HEK293 (cell line): ENCODE measurements at regions of chr16 and their contacts with region 1.

Region 1: GRCh38 chr16:74709441-74709877 is 8.8 kb upstream of the MLKL start:
- H3K4me3 ChIP-seq: no peak overlapping the region
- H3K27ac ChIP-seq: no peak overlapping the region
- H3K4me1 ChIP-seq: no peaks in the 10 kb centered on the region
- CTCF ChIP-seq: peak; percentile 88

Region 2: DNA sequence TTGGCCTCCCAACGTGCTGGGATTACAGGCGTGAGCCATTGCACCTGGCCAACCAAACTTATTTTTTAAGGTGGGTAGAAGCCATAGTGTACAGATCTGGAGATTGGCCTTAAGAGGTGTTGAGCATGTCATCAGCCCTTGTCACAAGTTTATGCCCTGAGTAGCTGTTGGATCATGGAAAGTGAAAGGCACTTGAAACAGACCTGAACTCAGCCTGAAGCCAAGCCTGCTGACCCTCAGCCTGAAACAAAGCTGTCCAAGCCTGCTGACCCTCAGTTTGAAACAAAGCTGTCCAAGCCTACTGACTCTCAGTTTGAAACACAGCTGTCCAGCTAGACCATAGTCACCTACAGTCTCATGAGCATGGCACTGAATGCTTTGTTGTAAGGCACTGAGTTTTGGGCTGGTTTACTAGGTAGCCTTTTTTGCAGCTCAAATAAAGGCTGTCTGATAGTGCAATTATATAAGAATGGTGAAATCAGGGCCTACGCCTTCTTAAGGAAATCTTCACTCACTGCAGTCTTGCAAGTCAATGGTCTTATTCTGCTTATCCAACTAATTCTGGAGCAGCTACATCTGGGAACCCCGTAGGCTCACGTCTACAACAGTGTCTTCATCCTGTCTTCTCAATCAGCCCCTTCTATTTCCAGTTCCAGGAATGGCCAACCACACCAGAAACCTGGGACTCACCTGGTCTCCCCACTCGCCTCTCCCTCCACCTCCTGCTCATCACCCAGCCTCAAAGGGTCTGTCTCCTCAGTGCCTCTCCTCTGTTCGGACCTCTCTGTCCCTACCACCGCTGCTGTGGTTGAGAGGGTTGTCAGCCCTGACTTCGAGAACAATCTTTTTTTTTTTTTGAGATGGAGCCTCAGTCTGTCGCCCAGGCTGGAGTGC is 336.3 kb before region 1 on chr16:
- CTCF ChIA-PET with region 1: no interaction called
- POLR2A ChIA-PET with region 1: no interaction called
- H3K4me3 ChIP-seq: no peak overlapping the region
- H3K27ac ChIP-seq: no peak overlapping the region
- H3K4me1 ChIP-seq: no peaks in the 10 kb centered on the region
- CTCF ChIP-seq: no peak

Region 3: DNA sequence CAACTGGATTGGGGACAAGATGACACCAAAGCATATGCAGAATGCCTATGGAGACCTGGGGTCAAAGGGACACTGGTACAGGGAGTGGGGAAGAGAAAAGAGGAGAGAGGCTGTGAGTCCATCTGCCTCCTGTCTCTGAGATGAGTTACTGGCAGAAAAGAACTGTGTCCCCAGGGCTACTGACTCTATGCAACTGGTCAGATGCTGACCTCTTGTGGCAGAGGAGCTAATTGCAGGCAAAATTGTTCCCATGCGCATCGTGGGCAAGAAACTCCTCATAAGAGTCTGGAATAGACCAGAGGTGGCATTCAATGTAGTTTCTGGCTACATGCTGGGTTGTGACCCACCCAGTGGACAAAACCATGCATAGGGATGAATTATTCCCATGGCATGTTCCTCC is 17.3 kb after region 1 on chr16:
- CTCF ChIA-PET with region 1: interaction called, 12 read pairs
- POLR2A ChIA-PET with region 1: interaction called, 3 read pairs
- H3K4me3 ChIP-seq: no peak overlapping the region
- H3K27ac ChIP-seq: no peak overlapping the region
- H3K4me1 ChIP-seq: no peaks in the 10 kb centered on the region
- CTCF ChIP-seq: peak; percentile 11; the same call in 1 of the 2 replicates

Region 4: DNA sequence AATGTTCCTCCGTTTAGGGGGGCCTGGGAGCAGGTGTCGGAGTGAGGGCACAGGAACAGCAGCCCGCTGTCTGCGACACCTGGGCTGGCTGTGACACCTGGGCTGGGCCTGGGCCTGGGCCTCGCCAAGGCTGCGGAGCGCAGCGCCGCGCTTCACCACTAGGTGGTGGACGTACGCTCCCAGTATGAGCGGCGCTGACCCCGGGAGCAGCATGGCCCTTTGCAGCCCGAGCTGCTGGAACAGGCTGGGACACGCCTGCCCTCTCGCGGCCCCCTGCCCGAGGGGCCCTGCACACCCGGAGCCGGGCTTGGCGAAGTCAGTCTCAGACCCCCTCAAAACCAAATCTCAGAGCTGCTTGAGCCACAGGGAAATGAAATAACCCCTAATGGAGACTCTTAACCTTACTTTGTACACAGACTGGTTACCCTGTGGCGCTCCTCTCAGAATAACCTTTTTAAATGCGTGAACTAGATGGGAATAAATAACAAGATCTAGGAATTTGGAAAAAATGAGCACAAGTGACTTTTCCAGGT is 103.7 kb after region 1 on chr16:
- CTCF ChIA-PET with region 1: interaction called, 40 read pairs
- POLR2A ChIA-PET with region 1: interaction called, 6 read pairs
- H3K4me3 ChIP-seq: no peak overlapping the region
- H3K27ac ChIP-seq: no peak overlapping the region
- H3K4me1 ChIP-seq: no peaks in the 10 kb centered on the region
- CTCF ChIP-seq: peak; percentile 99